IMR-90 (cell line): ENCODE measurements at regions of chr6 and their contacts with region 1.

Region 1: GRCh38 chr6:165662749-165663282 is at the start of gene PDE10A:
- DNase-seq: peak; percentile 55
- ATAC-seq: peak; percentile 76
- H3K4me3 ChIP-seq: peak within 1 kb of the TSS; percentile 75
- H3K27ac ChIP-seq: peak within 1 kb of the TSS; percentile 65
- H3K4me1 ChIP-seq: peaks cover 11% of the 10 kb centered on the region
- H3K27me3 ChIP-seq: peaks cover 3% of the 10 kb centered on the region
- CTCF ChIP-seq: no peak
- POLR2A ChIP-seq: 0 out of 2 replicates have a peak, but pooled peaks have one; percentile 33
- RAD21 ChIP-seq: no peak
- total RNA-seq, gene PDE10A: 12.4 and 15.8 TPM in 2 replicates

Region 2: GRCh38 chr6:165573671-165574070 is 89.1 kb before region 1 on chr6:
- CTCF ChIA-PET with region 1: no interaction called
- POLR2A ChIA-PET with region 1: no interaction called
- dilution Hi-C with region 1: no loop called
- in situ Hi-C with region 1: no loop called
- intact Hi-C with region 1: loop called (anchors 5 kb)
- DNase-seq: peak; percentile 92
- ATAC-seq: peak; percentile 10; the same call in 1 of the 2 replicates
- H3K4me3 ChIP-seq: no peak overlapping the region
- H3K27ac ChIP-seq: 0 out of 2 replicates have a peak overlapping the region, but pooled peaks have one; percentile 5
- H3K4me1 ChIP-seq: peaks cover 20% of the 10 kb centered on the region
- H3K27me3 ChIP-seq: no peaks in the 10 kb centered on the region
- CTCF ChIP-seq: no peak
- POLR2A ChIP-seq: no peak
- RAD21 ChIP-seq: no peak

Region 3: DNA sequence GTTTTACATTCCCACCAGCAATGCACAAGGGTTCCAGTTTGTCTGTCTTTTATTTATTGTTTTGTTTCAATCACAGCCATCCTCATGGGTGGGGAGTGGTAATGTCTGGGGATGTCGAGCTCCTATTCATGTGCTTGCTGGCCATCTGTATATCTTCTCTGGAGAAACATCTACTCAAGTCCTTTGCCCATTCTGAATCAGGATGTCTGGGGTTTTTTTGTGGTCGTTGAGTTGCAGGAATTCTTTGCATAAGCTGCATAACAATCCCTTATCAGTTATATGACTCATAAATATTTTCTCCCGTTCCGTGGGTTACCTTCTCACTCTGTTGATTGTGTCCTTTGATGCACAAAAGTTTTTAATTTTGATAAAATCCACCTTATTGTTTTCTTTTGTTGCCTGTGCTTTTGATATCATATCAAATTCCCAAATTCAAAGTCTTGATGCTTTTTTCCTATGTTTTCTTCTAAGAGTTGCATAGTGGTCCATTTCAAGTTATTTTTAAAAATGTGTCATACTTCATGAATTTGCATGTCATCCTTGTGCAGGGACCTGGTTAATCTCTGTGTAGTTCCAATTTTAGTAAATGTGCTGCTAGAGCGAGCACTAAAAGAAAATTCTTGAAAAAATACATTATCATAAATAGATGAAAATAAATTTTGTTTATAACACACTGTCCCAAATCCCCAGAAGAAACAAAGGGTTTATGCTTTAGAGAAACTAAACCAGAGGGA is 55.1 kb after region 1 on chr6:
- CTCF ChIA-PET with region 1: no interaction called
- POLR2A ChIA-PET with region 1: no interaction called
- dilution Hi-C with region 1: no loop called
- in situ Hi-C with region 1: no loop called
- intact Hi-C with region 1: loop called (anchors 2 kb)
- DNase-seq: peak; percentile 84
- ATAC-seq: peak; percentile 61
- H3K4me3 ChIP-seq: no peak overlapping the region; the same call in 1 of the 2 replicates
- H3K27ac ChIP-seq: peak overlapping the region; percentile 69; the same call in 1 of the 2 replicates
- H3K4me1 ChIP-seq: peaks cover 6% of the 10 kb centered on the region
- H3K27me3 ChIP-seq: no peaks in the 10 kb centered on the region
- CTCF ChIP-seq: no peak
- POLR2A ChIP-seq: no peak
- RAD21 ChIP-seq: no peak

Region 4: DNA sequence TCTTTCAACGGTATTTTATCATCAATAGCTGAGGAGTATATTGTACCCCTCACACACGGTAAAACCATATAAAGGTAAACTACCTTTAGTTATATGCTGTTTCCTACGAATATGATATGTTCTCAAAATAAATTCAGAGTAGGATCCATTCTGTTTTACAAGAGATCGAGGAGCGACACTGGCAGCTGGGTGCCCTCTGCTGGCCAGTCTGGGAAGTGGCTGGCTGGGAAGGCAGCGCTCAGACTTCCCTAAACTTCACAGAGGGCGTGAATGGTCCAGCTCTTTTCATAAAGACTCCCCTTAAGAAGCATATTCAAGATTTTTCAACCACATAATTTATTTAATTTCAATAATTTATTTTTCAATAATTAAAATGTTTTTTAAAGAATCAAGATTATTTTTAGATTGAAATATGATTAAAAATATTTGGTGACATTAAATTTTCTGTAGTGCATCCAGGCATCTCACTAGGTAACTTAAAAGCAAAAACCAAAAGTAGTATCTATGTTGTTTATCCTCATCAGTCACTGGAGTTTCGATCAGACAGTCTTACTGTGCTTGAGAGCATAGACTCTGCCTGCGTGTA is 187.7 kb after region 1 on chr6:
- CTCF ChIA-PET with region 1: no interaction called
- POLR2A ChIA-PET with region 1: no interaction called
- dilution Hi-C with region 1: no loop called
- in situ Hi-C with region 1: no loop called
- intact Hi-C with region 1: loop called (anchors 1 kb)
- DNase-seq: peak; percentile 57
- ATAC-seq: peak; percentile 88
- H3K4me3 ChIP-seq: no peak overlapping the region
- H3K27ac ChIP-seq: no peak overlapping the region
- H3K4me1 ChIP-seq: peaks cover 4% of the 10 kb centered on the region
- H3K27me3 ChIP-seq: no peaks in the 10 kb centered on the region
- CTCF ChIP-seq: peak; percentile 95
- POLR2A ChIP-seq: no peak
- RAD21 ChIP-seq: peak; percentile 93